Mammary epithelial cell (primary cell): ENCODE measurements at regions of chr3 and their contacts with region 1.

Region 1: DNA sequence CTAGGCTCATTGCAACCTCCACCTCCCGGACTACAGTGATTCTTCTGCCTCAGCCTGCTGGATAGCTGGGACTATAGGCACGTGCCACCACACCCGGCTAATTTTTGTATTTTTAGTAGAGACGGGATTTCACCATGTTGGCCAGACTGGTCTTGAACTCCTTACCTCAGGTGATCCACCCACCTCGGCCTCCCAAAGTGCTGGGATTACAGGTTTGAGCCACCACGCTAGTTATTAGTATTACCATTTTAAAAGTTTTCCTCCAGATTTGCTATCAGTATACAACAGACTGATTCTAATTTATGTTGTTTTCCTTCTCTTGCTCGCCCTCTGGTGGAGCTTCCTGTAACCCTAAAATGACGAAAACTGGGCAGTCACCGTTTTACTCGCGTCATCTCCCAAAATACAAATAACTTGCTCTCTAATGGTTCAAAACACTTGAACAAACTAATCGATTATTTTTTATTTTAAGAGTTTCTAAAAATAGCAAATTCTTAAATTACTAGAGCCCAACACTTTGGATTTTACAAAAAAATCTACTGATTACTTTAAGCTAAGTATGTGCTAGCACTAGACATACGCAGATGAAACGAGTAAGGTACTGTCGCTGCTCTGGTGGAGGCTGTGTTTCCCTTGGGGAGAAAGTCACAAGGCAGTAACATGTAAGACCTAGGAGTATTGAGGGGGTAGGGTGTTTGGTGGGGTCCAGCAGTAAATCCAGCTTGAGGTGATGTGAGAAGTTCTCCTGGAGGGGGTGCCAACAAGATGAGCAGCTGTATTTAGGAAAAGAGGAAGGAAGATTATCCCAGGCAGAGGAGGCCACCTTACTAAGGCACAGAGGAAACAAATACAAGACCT is 203.3 kb downstream of the MBNL1 start:
- DNase-seq: no peak
- H3K4me3 ChIP-seq: peak overlapping the region in 1 of 3 experiments; percentile 22
- H3K27ac ChIP-seq: no peak overlapping the region
- H3K4me1 ChIP-seq: no peaks in the 10 kb centered on the region
- H3K27me3 ChIP-seq: no peaks in the 10 kb centered on the region
- CTCF ChIP-seq: peak; percentile 61 to 68

Region 2: DNA sequence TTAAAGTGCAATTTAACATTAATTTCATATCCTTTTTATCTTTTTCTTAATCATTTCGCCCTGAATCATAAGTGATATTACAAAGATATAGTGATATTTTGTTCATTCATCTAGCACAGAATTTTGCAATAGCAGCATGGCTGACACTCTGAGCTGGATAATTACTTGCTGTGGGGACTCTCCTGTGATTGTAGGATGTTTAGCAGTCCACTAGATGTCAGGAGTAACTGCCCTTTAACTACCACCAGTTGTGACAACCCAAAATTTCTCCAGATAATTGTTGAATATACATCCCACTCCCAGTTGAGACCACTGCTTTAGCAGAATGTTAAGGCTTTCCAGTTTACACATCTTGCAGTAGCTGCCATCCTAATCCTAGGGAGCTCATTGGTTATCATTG is 400.1 kb before region 1 on chr3:
- CTCF ChIA-PET with region 1: interaction called, 6 read pairs
- dilution Hi-C with region 1: no loop called
- in situ Hi-C with region 1: no loop called
- intact Hi-C with region 1: loop called (anchors 1 kb)
- DNase-seq: peak; percentile 45
- H3K4me3 ChIP-seq: no peak overlapping the region
- H3K27ac ChIP-seq: no peak overlapping the region
- H3K4me1 ChIP-seq: peaks cover 3% of the 10 kb centered on the region
- H3K27me3 ChIP-seq: no peaks in the 10 kb centered on the region
- CTCF ChIP-seq: peak; percentile 51 to 67

Region 3: GRCh38 chr3:152524198-152525140 is 52.4 kb after region 1 on chr3:
- CTCF ChIA-PET with region 1: no interaction called
- dilution Hi-C with region 1: no loop called
- in situ Hi-C with region 1: no loop called
- intact Hi-C with region 1: loop called (anchors 2 kb)
- DNase-seq: peak; percentile 12
- H3K4me3 ChIP-seq: no peak overlapping the region
- H3K27ac ChIP-seq: no peak overlapping the region
- H3K4me1 ChIP-seq: no peaks in the 10 kb centered on the region
- H3K27me3 ChIP-seq: no peaks in the 10 kb centered on the region
- CTCF ChIP-seq: peak; percentile 78 to 94

Region 4: DNA sequence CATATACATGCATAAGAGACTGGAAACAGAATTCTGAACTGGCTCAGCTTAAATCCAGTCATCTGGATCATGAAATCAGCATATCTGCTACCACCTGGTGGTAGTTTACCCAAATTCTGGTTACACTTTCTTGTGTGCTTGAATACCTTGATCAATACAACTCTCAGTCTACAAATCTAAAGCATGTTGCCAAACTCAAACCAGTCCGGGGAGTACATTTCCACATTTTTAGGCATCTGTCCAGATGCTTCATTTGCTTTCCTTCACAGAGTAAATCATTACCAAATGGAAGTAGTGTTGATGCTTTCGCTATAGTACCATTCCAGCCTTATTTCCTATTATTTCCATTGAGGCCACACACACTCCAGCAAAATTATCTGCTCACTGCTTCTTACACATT is 489.3 kb after region 1 on chr3:
- CTCF ChIA-PET with region 1: no interaction called
- dilution Hi-C with region 1: no loop called
- in situ Hi-C with region 1: no loop called
- intact Hi-C with region 1: loop called (anchors 5 kb)
- DNase-seq: peak; percentile 34
- H3K4me3 ChIP-seq: no peak overlapping the region
- H3K27ac ChIP-seq: no peak overlapping the region
- H3K4me1 ChIP-seq: no peaks in the 10 kb centered on the region
- H3K27me3 ChIP-seq: no peaks in the 10 kb centered on the region
- CTCF ChIP-seq: peak; percentile 36 to 60